ENCODE measurements at regions of chr6 and their contacts with region 1.

Region 1: GRCh38 chr6:34414999-34415858 is 10.6 kb downstream of the RPS10 start:
- DNase-seq: peak in 1 of 2 donors; percentile 87
- H3K4me3 ChIP-seq: peak overlapping the region in 1 of 2 donors; percentile 39
- H3K27ac ChIP-seq: peak overlapping the region; percentile 76 to 81
- H3K4me1 ChIP-seq: peaks cover 4 to 8% of the 10 kb centered on the region in 2 donors
- H3K27me3 ChIP-seq: no peaks in the 10 kb centered on the region
- CTCF ChIP-seq: peak; percentile 63 to 82 (median 76)

Region 2: DNA sequence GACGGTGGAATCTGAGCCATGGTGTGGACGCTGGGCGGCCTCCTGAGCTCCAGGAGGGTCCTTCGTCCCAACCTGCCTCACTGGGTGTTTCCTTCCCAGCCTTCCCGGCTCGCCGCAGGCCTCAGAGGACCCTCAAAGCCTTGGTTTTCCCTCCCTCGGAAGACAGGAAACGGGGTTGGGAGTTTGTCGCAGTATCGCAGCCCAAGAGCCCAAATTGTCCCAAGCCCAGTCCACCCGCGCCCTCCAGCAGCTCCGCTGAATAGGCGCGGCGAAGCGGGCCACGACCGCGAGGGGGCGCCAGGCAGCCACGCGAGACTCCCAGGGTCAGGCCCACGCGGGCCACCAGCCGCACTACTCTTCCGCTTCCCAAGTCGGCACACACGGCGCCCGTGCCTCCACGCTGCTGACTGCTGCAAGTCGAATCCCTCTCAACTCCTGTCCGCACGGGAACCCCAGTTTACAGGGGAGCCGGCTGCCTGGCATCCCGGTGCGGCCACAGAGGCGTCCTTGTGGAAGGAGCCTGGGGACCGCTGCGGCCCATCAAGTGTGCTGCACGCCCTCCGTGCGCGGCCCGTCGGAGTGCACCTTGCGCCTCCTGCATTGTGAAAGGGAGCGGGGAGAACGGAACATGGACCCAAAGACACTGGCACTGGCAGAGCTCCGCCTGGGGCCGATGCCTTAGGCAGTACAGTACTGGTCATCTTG is 219.0 kb before region 1 on chr6:
- intact Hi-C with region 1: loop called (anchors 1 kb)
- DNase-seq: peak; percentile 53 to 92
- H3K4me3 ChIP-seq: peak overlapping the region; percentile 57 to 71
- H3K27ac ChIP-seq: no peak overlapping the region
- H3K4me1 ChIP-seq: peaks cover 0 to 6% of the 10 kb centered on the region in 2 donors
- H3K27me3 ChIP-seq: no peaks in the 10 kb centered on the region
- CTCF ChIP-seq: peak; percentile 98

Measured in ascending aorta (tissue), 2 donors.